ENCODE measurements at regions of chr22 and their contacts with region 1.

Region 1: GRCh38 chr22:45994491-45995404 is 17.8 kb upstream of the WNT7B start:
- H3K4me3 Mint-ChIP-seq: peak overlapping the region; percentile 41
- H3K27ac Mint-ChIP-seq: peak overlapping the region; percentile 95
- H3K4me1 Mint-ChIP-seq: peaks cover 60% of the 10 kb centered on the region
- H3K27me3 Mint-ChIP-seq: peaks cover 11% of the 10 kb centered on the region

Region 2: DNA sequence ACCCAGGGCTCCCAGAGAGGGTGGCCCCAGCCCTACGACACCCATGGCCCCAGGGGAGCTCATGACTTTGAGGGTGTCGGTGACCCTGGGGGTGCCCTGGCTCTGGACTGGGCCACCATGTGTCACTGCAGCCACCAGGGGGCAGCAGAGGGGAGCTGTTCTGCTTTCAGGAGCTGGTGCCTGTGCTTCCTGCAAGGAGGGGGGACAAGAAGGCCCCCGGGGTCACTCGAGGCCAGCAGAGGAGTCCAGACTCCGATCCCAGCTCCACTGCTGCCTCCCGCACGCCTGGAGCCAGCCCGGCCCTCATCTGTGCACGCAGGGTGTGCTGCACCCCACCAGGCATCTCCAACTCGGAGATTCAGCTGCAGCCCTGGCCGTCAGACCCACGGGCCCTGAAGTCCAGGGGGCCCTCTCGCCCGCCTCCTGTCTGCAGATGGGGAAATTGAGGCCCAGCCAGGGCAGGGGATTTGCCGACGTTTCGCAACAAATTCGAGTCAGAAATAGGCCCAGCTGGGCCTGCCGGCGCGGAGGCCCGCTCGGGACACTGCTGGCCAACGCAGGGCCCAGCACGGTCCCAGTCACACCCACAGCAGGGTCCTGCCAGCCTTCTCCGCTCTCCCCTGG is 11.7 kb after region 1 on chr22:
- intact Hi-C with region 1: loop called (anchors 1 kb)
- H3K4me3 Mint-ChIP-seq: peak overlapping the region; percentile 59
- H3K27ac Mint-ChIP-seq: peak overlapping the region; percentile 82
- H3K4me1 Mint-ChIP-seq: peaks cover 67% of the 10 kb centered on the region
- H3K27me3 Mint-ChIP-seq: no peaks in the 10 kb centered on the region

Region 3: GRCh38 chr22:46054091-46055073 is 59.6 kb after region 1 on chr22:
- intact Hi-C with region 1: no loop called
- H3K4me3 Mint-ChIP-seq: peak overlapping the region; percentile 94
- H3K27ac Mint-ChIP-seq: peak overlapping the region; percentile 96
- H3K4me1 Mint-ChIP-seq: peaks cover 79% of the 10 kb centered on the region
- H3K27me3 Mint-ChIP-seq: no peaks in the 10 kb centered on the region

Region 4: DNA sequence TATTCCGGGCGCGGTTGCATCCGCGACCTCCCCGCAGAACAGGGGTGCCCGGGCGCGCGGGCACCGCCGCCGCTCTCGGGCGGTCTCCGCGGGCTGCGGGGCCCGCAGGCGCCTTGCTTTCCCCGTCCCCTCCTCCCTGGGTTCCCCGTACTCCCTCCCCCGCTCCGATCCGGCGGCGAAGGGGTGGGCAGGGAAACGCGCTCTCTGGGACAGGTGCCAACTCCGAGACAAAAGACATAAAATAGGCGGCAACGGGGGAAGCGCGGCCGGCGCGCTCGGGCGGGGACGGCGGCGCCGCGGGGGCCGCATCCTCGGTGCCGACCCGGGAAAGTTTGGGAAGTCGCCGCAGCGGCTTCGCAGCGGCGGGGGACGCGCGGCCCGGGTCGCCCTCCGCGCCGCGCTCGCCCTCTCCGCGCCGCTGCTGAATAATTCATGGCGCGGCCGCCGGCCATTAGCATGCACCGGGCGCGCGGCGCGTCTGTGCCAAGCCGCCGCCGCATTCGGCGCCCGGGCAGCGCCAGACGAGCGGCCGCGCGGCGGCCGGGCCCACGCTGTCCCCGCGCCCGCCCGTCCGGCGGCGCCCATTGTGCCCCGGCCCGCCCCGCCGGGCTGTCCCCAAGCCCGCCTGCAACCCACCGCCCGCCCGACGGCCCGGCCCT is 76.8 kb after region 1 on chr22:
- intact Hi-C with region 1: loop called (anchors 5 kb)
- H3K4me3 Mint-ChIP-seq: peak overlapping the region; percentile 91
- H3K27ac Mint-ChIP-seq: peak overlapping the region; percentile 87
- H3K4me1 Mint-ChIP-seq: peaks cover 69% of the 10 kb centered on the region
- H3K27me3 Mint-ChIP-seq: no peaks in the 10 kb centered on the region

Region 5: DNA sequence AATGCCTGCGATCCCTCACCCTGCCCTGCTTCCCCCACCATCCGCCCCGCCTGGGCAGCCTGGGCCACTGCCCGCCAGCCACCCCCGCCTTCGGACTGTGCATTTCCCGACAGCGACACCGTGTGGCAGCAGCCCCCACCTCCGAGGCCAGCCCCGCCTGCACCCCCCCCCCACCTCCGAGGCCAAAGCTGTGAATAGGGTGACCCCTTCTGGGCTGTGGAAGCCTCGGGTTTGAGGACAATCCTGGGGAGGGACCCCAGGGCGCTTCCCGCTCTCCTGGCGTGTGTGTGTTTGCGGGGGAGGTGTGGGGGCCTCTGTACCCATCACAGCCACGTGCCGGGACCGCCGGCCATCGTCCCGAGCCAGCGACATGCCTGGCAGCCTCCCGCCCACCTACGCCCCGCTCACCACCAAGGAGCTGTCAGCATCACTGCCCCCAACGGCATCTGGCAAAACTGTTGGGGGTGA is 121.8 kb after region 1 on chr22:
- intact Hi-C with region 1: loop called (anchors 1 kb)
- H3K4me3 Mint-ChIP-seq: no peak overlapping the region
- H3K27ac Mint-ChIP-seq: peak overlapping the region; percentile 43
- H3K4me1 Mint-ChIP-seq: peaks cover 20% of the 10 kb centered on the region
- H3K27me3 Mint-ChIP-seq: peaks cover 9% of the 10 kb centered on the region

Region 6: DNA sequence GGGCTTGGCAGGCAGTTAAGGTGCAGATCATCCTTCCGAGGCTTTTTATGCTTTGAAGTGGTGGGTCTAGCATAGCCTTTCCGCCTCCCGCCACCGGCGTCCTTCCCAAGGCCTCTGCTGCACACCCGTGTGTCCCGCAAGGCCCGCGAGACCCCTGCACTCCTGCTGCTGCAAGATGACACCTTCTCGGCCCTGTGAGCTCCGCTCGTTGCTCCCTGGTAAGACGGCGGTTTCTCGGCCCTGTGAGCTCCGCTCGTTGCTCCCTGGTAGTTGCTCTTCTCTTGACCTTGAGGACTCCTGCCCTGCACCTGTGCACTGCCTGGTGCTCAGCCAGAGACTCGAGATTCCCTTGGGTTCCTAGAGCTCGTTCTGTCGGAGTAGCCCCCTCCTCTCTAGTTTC is 322.9 kb after region 1 on chr22:
- intact Hi-C with region 1: loop called (anchors 5 kb)
- H3K4me3 Mint-ChIP-seq: no peak overlapping the region
- H3K27ac Mint-ChIP-seq: no peak overlapping the region
- H3K4me1 Mint-ChIP-seq: no peaks in the 10 kb centered on the region
- H3K27me3 Mint-ChIP-seq: no peaks in the 10 kb centered on the region

Measured in dendritic cell treated with granulocyte-macrophage colony-stimulating factor and Interleukin-4, amounts not matched to agents 40 ng/mL and 50 ng/mL, for 4 days (primary cell).